GM12878 (cell line): ENCODE measurements at regions of chr4 and their contacts with region 1.

Region 1: DNA sequence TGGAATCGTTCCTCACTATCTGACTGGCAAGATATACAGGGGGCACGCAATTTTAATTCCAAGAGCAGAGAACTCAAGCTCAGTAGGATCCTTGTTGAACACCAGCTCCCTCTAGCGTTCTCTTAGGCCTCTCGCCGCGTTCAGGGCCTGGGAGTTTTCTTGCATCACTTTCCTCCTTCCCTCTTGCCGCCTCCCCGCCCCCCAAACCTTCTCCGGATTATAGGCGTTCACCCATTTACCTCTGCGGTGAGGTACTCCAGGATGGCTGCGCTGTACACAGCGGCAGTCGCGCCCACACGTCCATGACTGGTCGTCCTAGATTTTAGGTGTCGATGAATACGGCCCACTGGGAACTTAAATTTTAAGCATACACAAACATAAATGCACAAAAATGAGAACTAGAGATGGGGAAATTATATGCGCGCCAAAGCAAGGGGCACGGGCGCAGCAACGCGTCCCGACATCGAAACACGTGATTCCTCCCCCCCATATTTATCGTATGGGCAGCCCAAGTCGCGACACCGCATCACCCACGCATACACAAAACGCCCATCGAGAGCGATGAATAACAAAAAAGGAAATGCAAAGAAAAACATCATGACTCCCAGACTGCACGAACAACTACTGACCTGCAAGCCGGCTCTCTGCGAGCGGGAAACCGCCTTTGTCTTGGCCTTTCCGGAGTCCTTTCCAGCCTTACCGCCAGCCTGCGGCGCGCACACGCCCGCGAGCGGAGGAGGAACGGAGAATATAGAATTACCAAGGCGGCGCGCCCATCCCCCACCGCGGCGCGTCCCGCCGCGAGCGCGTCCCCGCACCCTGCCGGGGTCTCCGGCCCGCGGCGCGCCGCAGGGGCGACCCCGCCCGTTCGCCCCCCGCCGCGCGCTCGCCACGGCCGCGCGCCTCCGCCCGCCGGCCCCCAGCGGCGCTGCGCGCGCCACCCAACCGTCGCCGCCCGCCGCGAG is 759 bp downstream of the H2AZ1 start:
- DNase-seq: peak; percentile 77
- ATAC-seq: peak; percentile 39
- H3K4me3 ChIP-seq: peak overlapping the region; percentile 94
- H3K27ac ChIP-seq: peak overlapping the region; percentile 97
- H3K4me1 ChIP-seq: peaks cover 7% of the 10 kb centered on the region; the same call in 1 of the 2 replicates
- H3K27me3 ChIP-seq: no peaks in the 10 kb centered on the region
- CTCF ChIP-seq: peak; percentile 86 to 94 (median 89)
- EP300 ChIP-seq: no peak
- POLR2A ChIP-seq: peak; percentile 78
- RAD21 ChIP-seq: peak; percentile 75

Region 2: GRCh38 chr4:99088481-99089365 is 860.6 kb before region 1 on chr4 and contains the start of gene ADH5:
- CTCF ChIA-PET with region 1: no interaction called
- POLR2A ChIA-PET with region 1: no interaction called
- RAD21 ChIA-PET with region 1: no interaction called
- SMC1A ChIA-PET with region 1: no interaction called
- in situ Hi-C with region 1: loop called (anchors 25 kb)
- intact Hi-C with region 1: no loop called
- DNase-seq: peak; percentile 51
- ATAC-seq: peak; percentile 95
- H3K4me3 ChIP-seq: peak within 1 kb of the TSS; percentile 90
- H3K27ac ChIP-seq: peak within 1 kb of the TSS; percentile 76
- H3K4me1 ChIP-seq: no peaks in the 10 kb centered on the region
- H3K27me3 ChIP-seq: no peaks in the 10 kb centered on the region
- CTCF ChIP-seq: no peak
- EP300 ChIP-seq: no peak
- POLR2A ChIP-seq: peak; percentile 96
- RAD21 ChIP-seq: no peak
- polyA plus RNA-seq, gene ADH5: 96.3 to 134 TPM

Region 3: GRCh38 chr4:99763635-99764101 is 185.6 kb before region 1 on chr4:
- CTCF ChIA-PET with region 1: no interaction called
- POLR2A ChIA-PET with region 1: no interaction called
- RAD21 ChIA-PET with region 1: no interaction called
- SMC1A ChIA-PET with region 1: no interaction called
- in situ Hi-C with region 1: no loop called
- intact Hi-C with region 1: no loop called
- DNase-seq: no peak
- ATAC-seq: no peak; the same call in 2 of the 3 replicates
- H3K4me3 ChIP-seq: no peak overlapping the region
- H3K27ac ChIP-seq: no peak overlapping the region
- H3K4me1 ChIP-seq: no peaks in the 10 kb centered on the region
- H3K27me3 ChIP-seq: no peaks in the 10 kb centered on the region
- CTCF ChIP-seq: no peak
- EP300 ChIP-seq: no peak
- POLR2A ChIP-seq: no peak
- RAD21 ChIP-seq: no peak

Region 4: GRCh38 chr4:99816545-99817308 is 132.6 kb before region 1 on chr4 and contains the start of gene DAPP1:
- CTCF ChIA-PET with region 1: interaction called, 106 read pairs
- POLR2A ChIA-PET with region 1: interaction called, 27 read pairs
- RAD21 ChIA-PET with region 1: interaction called, 95 read pairs
- SMC1A ChIA-PET with region 1: interaction called, 42 read pairs
- in situ Hi-C with region 1: loop called (anchors 5 kb)
- intact Hi-C with region 1: loop called (anchors 1 kb)
- DNase-seq: peak; percentile 94
- ATAC-seq: peak; percentile 88
- H3K4me3 ChIP-seq: peak within 1 kb of the TSS; percentile 95
- H3K27ac ChIP-seq: peak within 1 kb of the TSS; percentile 85
- H3K4me1 ChIP-seq: peaks cover 19% of the 10 kb centered on the region
- H3K27me3 ChIP-seq: no peaks in the 10 kb centered on the region
- CTCF ChIP-seq: no peak
- EP300 ChIP-seq: peak; percentile 65 to 71; a peak in 3 of 4 replicates
- POLR2A ChIP-seq: peak; percentile 98
- RAD21 ChIP-seq: no peak
- polyA plus RNA-seq, gene DAPP1: 104 to 147 TPM

Region 5: DNA sequence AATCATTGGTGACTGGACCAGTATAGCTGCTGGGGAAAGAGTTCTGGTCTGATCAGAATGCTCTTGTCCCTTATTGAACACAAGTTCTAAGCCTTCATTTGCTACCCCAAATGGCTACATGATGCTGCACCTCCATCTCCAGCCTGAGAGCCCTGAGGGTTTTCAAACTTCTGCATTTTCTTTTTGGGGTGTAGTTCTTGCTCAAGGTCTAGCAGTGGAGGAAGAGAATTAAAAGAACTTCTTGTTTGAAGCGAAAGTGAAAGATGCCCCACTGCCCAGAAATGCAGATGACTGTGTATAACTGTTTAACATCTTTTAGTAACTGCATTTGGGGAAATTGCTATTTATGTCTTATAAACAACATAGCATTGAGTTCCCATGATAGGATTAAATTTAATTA is 93.6 kb before region 1 on chr4:
- CTCF ChIA-PET with region 1: interaction called, 8 read pairs
- POLR2A ChIA-PET with region 1: interaction called, 5 read pairs
- RAD21 ChIA-PET with region 1: interaction called, 6 read pairs
- SMC1A ChIA-PET with region 1: interaction called, 16 read pairs
- in situ Hi-C with region 1: no loop called
- intact Hi-C with region 1: loop called (anchors 2 kb)
- DNase-seq: peak; percentile 53
- ATAC-seq: peak; percentile 28
- H3K4me3 ChIP-seq: no peak overlapping the region
- H3K27ac ChIP-seq: peak overlapping the region; percentile 58; the same call in 1 of the 2 replicates
- H3K4me1 ChIP-seq: peaks cover 43% of the 10 kb centered on the region
- H3K27me3 ChIP-seq: no peaks in the 10 kb centered on the region
- CTCF ChIP-seq: no peak
- EP300 ChIP-seq: 0 out of 4 replicates have a peak, but pooled peaks of 1 of the 2 experiments have one; percentile 9
- POLR2A ChIP-seq: no peak
- RAD21 ChIP-seq: no peak

Region 6: GRCh38 chr4:99894161-99894997 is 54.9 kb before region 1 on chr4 and contains the start of gene LAMTOR3:
- CTCF ChIA-PET with region 1: interaction called, 13 read pairs
- POLR2A ChIA-PET with region 1: interaction called, 23 read pairs
- RAD21 ChIA-PET with region 1: interaction called, 31 read pairs
- SMC1A ChIA-PET with region 1: interaction called, 15 read pairs
- in situ Hi-C with region 1: no loop called
- intact Hi-C with region 1: loop called (anchors 1 kb)
- DNase-seq: peak; percentile 75
- ATAC-seq: peak; percentile 99
- H3K4me3 ChIP-seq: peak within 1 kb of the TSS; percentile 100
- H3K27ac ChIP-seq: peak within 1 kb of the TSS; percentile 69
- H3K4me1 ChIP-seq: no peaks in the 10 kb centered on the region
- H3K27me3 ChIP-seq: no peaks in the 10 kb centered on the region
- CTCF ChIP-seq: no peak
- EP300 ChIP-seq: no peak
- POLR2A ChIP-seq: peak; percentile 83
- RAD21 ChIP-seq: no peak
- polyA plus RNA-seq, gene LAMTOR3: 88.7 to 120 TPM

Region 7: DNA sequence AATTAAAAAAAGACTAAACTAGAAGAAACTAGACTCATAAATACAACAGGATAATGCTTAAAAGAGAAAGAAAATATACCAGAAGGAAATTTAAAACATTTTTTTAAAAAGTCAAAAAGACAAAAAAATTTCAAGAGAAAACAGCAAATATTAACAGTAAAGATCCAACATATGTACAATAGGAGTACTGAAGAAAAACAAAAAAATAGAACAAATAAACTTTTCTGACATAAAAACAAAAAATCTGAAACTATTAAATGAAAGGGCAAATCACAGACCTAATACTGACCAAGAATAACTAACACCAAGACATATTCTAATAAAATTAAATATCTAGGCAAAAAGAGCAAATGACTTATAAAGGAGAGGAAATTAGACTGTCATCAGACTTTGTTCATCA is 14.4 kb before region 1 on chr4:
- CTCF ChIA-PET with region 1: interaction called, 3 read pairs
- POLR2A ChIA-PET with region 1: interaction called, 11 read pairs
- RAD21 ChIA-PET with region 1: interaction called, 5 read pairs
- SMC1A ChIA-PET with region 1: interaction called, 14 read pairs
- in situ Hi-C with region 1: no loop called
- intact Hi-C with region 1: no loop called
- DNase-seq: no peak
- ATAC-seq: no peak
- H3K4me3 ChIP-seq: no peak overlapping the region
- H3K27ac ChIP-seq: no peak overlapping the region
- H3K4me1 ChIP-seq: no peaks in the 10 kb centered on the region
- H3K27me3 ChIP-seq: no peaks in the 10 kb centered on the region
- CTCF ChIP-seq: no peak
- EP300 ChIP-seq: no peak
- POLR2A ChIP-seq: no peak
- RAD21 ChIP-seq: no peak

Region 8: DNA sequence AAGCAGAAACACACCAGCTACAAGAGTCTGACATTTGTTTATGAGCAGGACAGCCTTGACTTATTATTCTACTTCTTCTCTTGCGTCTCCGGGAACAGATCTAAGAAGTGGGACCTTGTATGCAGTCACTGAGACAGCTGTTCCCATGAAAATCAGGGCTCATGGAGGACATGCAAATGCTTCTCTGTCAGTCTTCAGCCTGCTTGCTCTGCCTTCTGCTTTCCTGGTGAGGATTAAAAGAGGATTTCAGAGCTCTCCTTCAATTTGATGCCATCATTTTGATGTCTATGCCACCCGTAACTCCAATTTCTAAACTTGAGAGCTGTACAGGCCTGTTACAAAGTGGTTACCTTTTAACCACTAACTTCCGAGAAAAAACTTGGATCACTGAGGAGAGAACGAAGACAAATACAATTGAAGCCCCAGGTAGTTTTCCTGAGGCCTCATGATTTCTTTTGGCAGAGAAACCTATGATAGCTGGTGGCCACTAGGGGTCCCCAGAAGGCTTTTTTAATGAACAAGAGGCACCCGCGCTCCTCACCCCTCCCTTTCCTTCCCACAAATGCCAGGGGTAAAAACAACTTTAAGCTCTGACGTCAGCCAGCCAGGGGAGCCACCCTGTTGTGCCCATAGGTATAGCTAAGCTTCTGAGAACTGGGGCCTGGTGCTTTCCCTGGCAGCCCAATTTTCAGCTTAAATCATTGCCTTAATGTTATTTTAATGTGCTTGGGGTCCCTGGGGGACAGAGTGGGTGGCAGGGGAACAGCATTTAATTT is 144.0 kb after region 1 on chr4:
- CTCF ChIA-PET with region 1: interaction called, 13 read pairs
- POLR2A ChIA-PET with region 1: interaction called, 3 read pairs
- RAD21 ChIA-PET with region 1: interaction called, 3 read pairs
- SMC1A ChIA-PET with region 1: interaction called, 4 read pairs
- in situ Hi-C with region 1: no loop called
- intact Hi-C with region 1: no loop called
- DNase-seq: peak; percentile 43
- ATAC-seq: peak; percentile 95
- H3K4me3 ChIP-seq: no peak overlapping the region
- H3K27ac ChIP-seq: no peak overlapping the region
- H3K4me1 ChIP-seq: no peaks in the 10 kb centered on the region
- H3K27me3 ChIP-seq: no peaks in the 10 kb centered on the region
- CTCF ChIP-seq: peak; percentile 78 to 87 (median 81)
- EP300 ChIP-seq: peak in 1 of 2 experiments; percentile 20; a peak in 2 of 4 replicates
- POLR2A ChIP-seq: no peak
- RAD21 ChIP-seq: peak; percentile 78